Tibial artery (tissue), 4 donors: ENCODE measurements at regions of chr6 and their contacts with region 1.

Region 1: DNA sequence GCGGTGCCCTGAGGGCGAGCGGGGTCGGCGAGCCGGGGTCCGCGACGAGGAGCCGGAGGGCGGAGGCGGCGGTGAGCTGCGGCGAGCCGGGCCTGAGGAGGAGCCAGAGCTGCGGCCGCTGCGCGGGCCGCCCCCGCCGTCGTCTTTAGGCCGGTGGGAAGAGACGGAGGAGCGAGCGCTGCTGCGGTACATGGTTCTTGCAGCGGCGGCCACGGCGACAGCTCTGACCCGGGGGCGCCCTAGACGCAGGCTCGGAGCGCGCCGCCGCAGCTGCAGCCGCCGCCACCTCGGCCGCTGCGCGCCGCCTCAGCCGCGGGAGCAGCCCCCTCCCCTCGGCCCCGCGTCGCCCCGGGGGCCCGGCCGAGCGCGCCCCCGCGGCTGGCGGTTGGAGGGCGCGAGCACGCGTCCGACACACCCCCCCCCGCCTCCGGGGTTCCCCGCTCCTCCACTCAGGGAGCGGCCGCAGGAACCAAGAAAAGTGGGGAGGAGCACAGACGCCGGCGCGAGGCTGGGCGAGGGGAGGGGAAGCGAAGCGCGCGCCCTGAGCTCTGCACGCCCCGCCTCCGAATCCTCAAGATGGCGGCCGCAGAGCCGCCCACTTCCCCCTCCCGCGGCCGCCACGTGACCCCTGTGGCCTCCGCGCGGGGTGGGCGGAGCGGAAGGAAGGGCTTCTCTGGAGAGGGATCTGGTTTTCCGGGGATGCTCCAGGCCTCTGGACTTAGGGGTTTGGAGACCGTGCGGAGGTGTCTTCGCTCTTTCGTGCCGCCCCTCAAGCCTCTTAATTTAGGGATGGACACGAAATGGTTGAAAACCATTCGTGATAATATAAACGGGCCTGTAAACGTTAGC is at the start of gene ZNF318:
- DNase-seq: peak; percentile 94 to 98
- H3K4me3 ChIP-seq: peak within 1 kb of the TSS; percentile 78 to 96
- H3K27ac ChIP-seq: peak within 1 kb of the TSS; percentile 83 to 88
- H3K4me1 ChIP-seq: peaks cover 0 to 26% (median 18%) of the 10 kb centered on the region in 4 donors
- H3K27me3 ChIP-seq: no peaks in the 10 kb centered on the region
- CTCF ChIP-seq: no peak

Region 2: GRCh38 chr6:43427406-43428111 is 58.2 kb after region 1 on chr6 and contains the start of gene ABCC10:
- intact Hi-C with region 1: loop called (anchors 5 kb)
- DNase-seq: peak; percentile 93 to 96
- H3K4me3 ChIP-seq: peak within 1 kb of the TSS; percentile 73 to 74
- H3K27ac ChIP-seq: peak within 1 kb of the TSS; percentile 65 to 88
- H3K4me1 ChIP-seq: peaks cover 0 to 29% (median 15%) of the 10 kb centered on the region in 4 donors
- H3K27me3 ChIP-seq: no peaks in the 10 kb centered on the region
- CTCF ChIP-seq: peak; percentile 32 to 37

Region 3: DNA sequence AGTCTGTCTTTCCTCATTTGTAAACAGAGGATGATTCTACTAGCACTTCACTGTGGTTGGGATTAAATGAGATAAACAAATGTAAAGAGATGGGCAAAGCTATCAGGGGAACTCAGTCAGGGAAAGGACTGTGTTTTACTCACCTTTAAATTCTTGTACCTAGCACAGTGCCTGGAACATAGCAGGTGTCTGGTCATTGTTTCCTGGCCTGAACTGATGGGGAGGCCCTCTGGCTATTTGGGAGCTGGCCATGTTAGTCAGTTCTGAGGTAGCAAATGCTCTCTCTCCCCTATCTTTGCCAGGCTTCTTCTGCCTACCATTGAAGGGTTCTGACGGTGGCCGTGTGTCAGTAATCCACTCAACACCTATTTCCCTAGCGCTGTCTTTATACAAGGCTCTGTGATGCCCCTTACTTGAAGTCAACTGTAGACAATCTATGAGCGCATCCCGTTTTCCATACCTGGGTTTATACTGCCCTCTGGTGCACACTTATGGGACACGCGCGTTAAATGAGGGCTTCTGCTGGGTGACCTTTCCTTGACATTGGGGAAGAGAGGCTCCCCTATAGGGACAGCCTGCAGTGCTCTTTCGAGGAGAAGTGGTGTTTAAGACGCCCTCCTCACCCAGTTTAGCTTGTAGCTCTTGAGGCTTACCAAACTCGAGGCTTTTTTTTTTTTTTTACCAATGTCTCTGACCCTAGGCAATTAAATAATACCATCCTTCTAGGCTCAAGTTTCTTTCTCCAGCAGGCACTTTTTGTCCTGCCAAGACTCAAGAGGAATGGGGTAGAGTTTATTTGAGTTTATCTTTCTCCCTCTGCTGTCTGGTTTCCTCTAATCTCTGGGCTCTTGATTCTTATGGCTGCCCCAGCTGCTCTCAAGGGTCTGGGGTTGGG is 969.1 kb after region 1 on chr6:
- intact Hi-C with region 1: no loop called
- DNase-seq: peak; percentile 67 to 69
- H3K4me3 ChIP-seq: no peak overlapping the region
- H3K27ac ChIP-seq: no peak overlapping the region
- H3K4me1 ChIP-seq: peaks cover 0 to 23% (median 7%) of the 10 kb centered on the region in 4 donors
- H3K27me3 ChIP-seq: peaks cover 0 to 51% of the 10 kb centered on the region in 2 donors
- CTCF ChIP-seq: peak; percentile 62 to 66